Dorsolateral prefrontal cortex (tissue), 120 donors: ENCODE measurements at regions of chr10 and their contacts with region 1.

Region 1: GRCh38 chr10:75887992-75888680 is 456.7 kb downstream of the LRMDA start:
- DNase-seq: no peak
- H3K4me3 ChIP-seq: no peak overlapping the region
- H3K27ac ChIP-seq: no peak overlapping the region
- H3K27me3 ChIP-seq: no peaks in the 10 kb centered on the region
- CTCF ChIP-seq: no peak

Region 2: GRCh38 chr10:75449382-75450070 is 438.6 kb before region 1 on chr10:
- intact Hi-C with region 1: loop called in 1 of 2 experiments (anchors 10 kb)
- DNase-seq: no peak
- H3K4me3 ChIP-seq: no peak overlapping the region
- H3K27ac ChIP-seq: no peak overlapping the region
- H3K27me3 ChIP-seq: peaks cover 0 to 45% (median 17%) of the 10 kb centered on the region in 45 donors
- CTCF ChIP-seq: no peak

Region 3: GRCh38 chr10:75971402-75972211 is 83.5 kb after region 1 on chr10:
- intact Hi-C with region 1: no loop called
- DNase-seq: no peak
- H3K4me3 ChIP-seq: no peak overlapping the region
- H3K27ac ChIP-seq: no peak overlapping the region
- H3K27me3 ChIP-seq: peaks cover 0 to 54% (median 0%) of the 10 kb centered on the region in 45 donors
- CTCF ChIP-seq: no peak

Region 4: GRCh38 chr10:76015245-76015644 is 127.1 kb after region 1 on chr10:
- intact Hi-C with region 1: no loop called
- DNase-seq: no peak
- H3K4me3 ChIP-seq: no peak overlapping the region
- H3K27ac ChIP-seq: no peak overlapping the region
- H3K27me3 ChIP-seq: peaks cover 0 to 21% (median 0%) of the 10 kb centered on the region in 45 donors
- CTCF ChIP-seq: no peak